ENCODE measurements at regions of chr14 and their contacts with region 1.

Region 1: GRCh38 chr14:75654127-75654732 is 6.4 kb downstream of the ERG28 start:
- DNase-seq: peak; percentile 78 to 80
- H3K4me3 ChIP-seq: no peak overlapping the region
- H3K27ac ChIP-seq: no peak overlapping the region
- H3K4me1 ChIP-seq: no peaks in the 10 kb centered on the region
- H3K27me3 ChIP-seq: no peaks in the 10 kb centered on the region
- CTCF ChIP-seq: peak; percentile 86 to 94 (median 92)
- POLR2A ChIP-seq: no peak

Region 2: GRCh38 chr14:75044322-75044721 is 609.9 kb before region 1 on chr14:
- intact Hi-C with region 1: no loop called
- DNase-seq: no peak
- H3K4me3 ChIP-seq: no peak overlapping the region
- H3K27ac ChIP-seq: peak overlapping the region in 1 of 2 donors; percentile 10
- H3K4me1 ChIP-seq: no peaks in the 10 kb centered on the region
- H3K27me3 ChIP-seq: no peaks in the 10 kb centered on the region
- CTCF ChIP-seq: no peak
- POLR2A ChIP-seq: no peak

Region 3: GRCh38 chr14:75577729-75578101 is 76.5 kb before region 1 on chr14:
- intact Hi-C with region 1: loop called (anchors 5 kb)
- DNase-seq: peak; percentile 81 to 84
- H3K4me3 ChIP-seq: peak overlapping the region; percentile 51 to 57
- H3K27ac ChIP-seq: peak overlapping the region; percentile 81
- H3K4me1 ChIP-seq: peaks cover 0 to 10% of the 10 kb centered on the region in 2 donors
- H3K27me3 ChIP-seq: no peaks in the 10 kb centered on the region
- CTCF ChIP-seq: peak; percentile 65 to 81 (median 78)
- POLR2A ChIP-seq: no peak

Region 4: DNA sequence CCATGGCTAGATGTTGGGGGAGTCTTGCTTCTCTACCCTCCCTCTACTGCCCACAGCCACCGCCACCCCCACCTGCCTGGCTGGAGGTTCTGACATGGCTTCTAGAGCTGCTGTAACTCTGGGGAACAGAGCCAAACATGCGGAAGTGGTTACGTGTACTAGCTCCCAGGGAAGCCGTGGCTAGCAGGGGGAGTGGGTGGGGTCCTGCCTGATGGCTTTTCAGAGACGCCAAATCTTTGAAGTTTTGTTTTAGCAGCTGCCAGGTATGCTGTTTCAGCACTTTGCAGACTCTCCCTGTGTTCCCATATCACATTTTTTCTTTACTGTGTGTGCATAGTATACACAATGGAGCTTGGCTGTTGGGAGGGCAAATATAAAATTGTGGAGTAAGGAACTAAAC is 177.2 kb after region 1 on chr14:
- intact Hi-C with region 1: no loop called
- DNase-seq: peak; percentile 80 to 85
- H3K4me3 ChIP-seq: no peak overlapping the region
- H3K27ac ChIP-seq: peak overlapping the region; percentile 76 to 83
- H3K4me1 ChIP-seq: no peaks in the 10 kb centered on the region
- H3K27me3 ChIP-seq: no peaks in the 10 kb centered on the region
- CTCF ChIP-seq: no peak
- POLR2A ChIP-seq: no peak

Region 5: GRCh38 chr14:76117789-76118484 is 463.7 kb after region 1 on chr14:
- intact Hi-C with region 1: no loop called
- DNase-seq: no peak
- H3K4me3 ChIP-seq: no peak overlapping the region
- H3K27ac ChIP-seq: no peak overlapping the region
- H3K4me1 ChIP-seq: no peaks in the 10 kb centered on the region
- H3K27me3 ChIP-seq: no peaks in the 10 kb centered on the region
- CTCF ChIP-seq: no peak
- POLR2A ChIP-seq: no peak

Measured in uterus (tissue), 4 donors.